ENCODE measurements at regions of chr20 and their contacts with region 1.

Region 1: GRCh38 chr20:58650776-58651558 is at the start of gene STX16:
- DNase-seq: peak; percentile 37 to 93
- H3K4me3 ChIP-seq: peak within 1 kb of the TSS; percentile 85 to 98
- H3K27ac ChIP-seq: peak within 1 kb of the TSS; percentile 85 to 93
- H3K4me1 ChIP-seq: peaks cover 3 to 41% of the 10 kb centered on the region in 2 donors
- H3K27me3 ChIP-seq: no peaks in the 10 kb centered on the region
- CTCF ChIP-seq: peak; percentile 46 to 63 (median 59)
- total RNA-seq, gene STX16: 24.7 TPM

Region 2: DNA sequence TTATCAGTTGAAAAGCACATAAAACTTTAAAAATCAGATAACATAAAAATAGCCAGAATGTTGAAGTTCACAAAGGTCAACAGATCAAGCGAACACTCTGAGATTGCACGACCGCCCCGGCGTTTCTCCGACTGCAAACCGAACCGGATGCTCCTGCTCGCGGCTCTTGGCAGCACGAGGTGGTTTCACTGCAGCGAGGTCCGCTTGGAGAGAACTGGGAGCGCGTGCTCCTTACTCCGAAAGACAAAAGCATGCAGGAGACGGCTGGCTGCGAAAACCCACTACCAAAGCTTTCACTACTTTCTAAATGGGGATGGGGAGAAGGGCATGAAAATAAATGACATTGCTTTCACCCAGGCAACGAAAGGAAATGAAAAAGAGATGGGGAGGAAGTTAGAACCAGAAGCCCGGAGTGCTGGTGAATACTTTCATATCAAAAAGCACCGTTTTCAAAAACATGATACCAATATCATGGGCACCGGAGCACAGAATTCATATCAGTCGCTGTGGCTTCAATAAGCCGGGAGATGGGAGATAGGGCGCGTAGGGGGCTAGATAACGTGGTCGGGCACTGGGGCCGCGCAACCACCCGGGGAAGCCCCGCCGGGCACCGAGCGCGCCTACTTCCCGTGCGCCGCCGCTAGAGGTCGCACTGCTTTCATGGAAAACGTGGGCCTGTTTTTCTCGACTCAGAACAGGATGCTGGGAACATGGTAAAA is 414.2 kb before region 1 on chr20:
- intact Hi-C with region 1: loop called (anchors 2 kb)
- DNase-seq: peak in 1 of 2 donors; percentile 85
- H3K4me3 ChIP-seq: peak overlapping the region; percentile 49 to 58
- H3K27ac ChIP-seq: peak overlapping the region; percentile 14 to 45
- H3K4me1 ChIP-seq: peaks cover 0 to 2% of the 10 kb centered on the region in 2 donors
- H3K27me3 ChIP-seq: no peaks in the 10 kb centered on the region
- CTCF ChIP-seq: peak; percentile 84 to 94 (median 94)

Region 3: DNA sequence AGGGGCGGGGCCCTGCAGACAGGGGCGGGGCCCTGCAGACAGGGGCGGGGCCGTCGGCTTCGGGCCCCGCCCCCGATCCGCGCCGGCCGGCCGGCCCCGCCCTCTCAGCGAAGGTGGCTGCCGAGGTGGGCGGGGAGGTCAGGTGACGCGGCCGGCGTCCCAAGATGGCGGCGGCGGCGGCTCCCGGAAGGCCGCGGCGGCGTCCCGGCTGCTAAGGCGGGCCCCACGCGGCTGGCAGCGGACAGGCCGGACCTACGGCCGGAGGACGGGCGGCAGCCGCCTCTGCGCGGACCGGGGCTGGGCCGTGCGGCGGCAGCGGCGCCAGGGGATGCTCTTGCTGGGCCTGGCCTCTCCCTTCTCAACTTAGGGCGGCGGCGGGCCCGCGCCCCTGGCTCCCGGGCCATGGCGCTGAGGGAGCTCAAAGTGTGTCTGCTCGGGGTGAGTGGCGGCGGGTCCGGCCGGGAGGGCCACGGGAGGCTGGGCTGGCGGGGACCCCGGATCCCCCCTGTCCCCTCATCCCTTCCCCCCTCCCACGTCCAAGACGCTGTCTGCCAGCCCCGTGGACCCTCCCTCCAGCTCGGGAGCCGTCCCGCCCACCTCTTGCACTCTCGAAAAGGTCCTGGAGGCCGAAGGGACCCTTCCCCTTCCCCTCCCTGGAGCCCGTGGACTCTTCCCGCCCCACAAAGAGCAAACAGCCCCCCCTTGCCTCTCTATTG is 341.2 kb before region 1 on chr20 and contains the start of gene RAB22A:
- intact Hi-C with region 1: loop called (anchors 2 kb)
- DNase-seq: peak in 1 of 2 donors; percentile 89
- H3K4me3 ChIP-seq: peak within 1 kb of the TSS; percentile 80 to 90
- H3K27ac ChIP-seq: peak within 1 kb of the TSS; percentile 78 to 82
- H3K4me1 ChIP-seq: peaks cover 0 to 6% of the 10 kb centered on the region in 2 donors
- H3K27me3 ChIP-seq: no peaks in the 10 kb centered on the region
- CTCF ChIP-seq: no peak
- total RNA-seq, gene RAB22A: 17.8 TPM

Region 4: DNA sequence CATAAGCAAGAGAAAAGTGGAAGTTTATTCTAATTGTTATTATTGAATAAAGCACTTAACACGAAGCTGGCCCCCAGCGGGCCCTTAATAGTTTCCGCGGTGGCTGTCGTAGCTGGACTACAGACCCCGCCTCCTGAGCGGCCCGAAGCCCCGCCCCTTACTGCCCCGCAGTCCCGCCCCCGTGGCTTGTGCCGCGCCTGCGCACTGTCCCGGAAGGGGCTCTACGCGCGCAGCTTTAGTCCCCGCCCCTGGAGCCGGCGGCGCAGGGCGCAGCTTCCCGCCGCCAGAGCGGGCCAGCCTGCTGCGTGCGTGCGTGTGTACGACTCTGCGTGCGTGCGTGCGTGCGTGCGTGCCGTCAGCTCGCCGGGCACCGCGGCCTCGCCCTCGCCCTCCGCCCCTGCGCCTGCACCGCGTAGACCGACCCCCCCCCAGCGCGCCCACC is 262.1 kb before region 1 on chr20 and contains the start of gene VAPB:
- intact Hi-C with region 1: loop called (anchors 2 kb)
- DNase-seq: peak; percentile 69 to 96
- H3K4me3 ChIP-seq: peak within 1 kb of the TSS; percentile 73 to 79
- H3K27ac ChIP-seq: peak within 1 kb of the TSS; percentile 81 to 91
- H3K4me1 ChIP-seq: peaks cover 3 to 15% of the 10 kb centered on the region in 2 donors
- H3K27me3 ChIP-seq: no peaks in the 10 kb centered on the region
- CTCF ChIP-seq: no peak
- total RNA-seq, gene VAPB: 11.1 TPM

Region 5: GRCh38 chr20:58515233-58516184 is 135.5 kb before region 1 on chr20 and contains the start of gene APCDD1L:
- intact Hi-C with region 1: loop called (anchors 2 kb)
- DNase-seq: peak in 1 of 2 donors; percentile 76
- H3K4me3 ChIP-seq: peak within 1 kb of the TSS; percentile 41 to 63
- H3K27ac ChIP-seq: peak within 1 kb of the TSS; percentile 2 to 48
- H3K4me1 ChIP-seq: peaks cover 7 to 15% of the 10 kb centered on the region in 2 donors
- H3K27me3 ChIP-seq: no peaks in the 10 kb centered on the region
- CTCF ChIP-seq: no peak
- total RNA-seq, gene APCDD1L: 2.1 TPM

Region 6: GRCh38 chr20:58584881-58585752 is 65.8 kb before region 1 on chr20:
- intact Hi-C with region 1: no loop called
- DNase-seq: peak in 1 of 2 donors; percentile 13
- H3K4me3 ChIP-seq: no peak overlapping the region
- H3K27ac ChIP-seq: no peak overlapping the region
- H3K4me1 ChIP-seq: no peaks in the 10 kb centered on the region
- H3K27me3 ChIP-seq: no peaks in the 10 kb centered on the region
- CTCF ChIP-seq: no peak

Region 7: GRCh38 chr20:58612121-58612691 is 38.8 kb before region 1 on chr20:
- intact Hi-C with region 1: loop called (anchors 2 kb)
- DNase-seq: no peak
- H3K4me3 ChIP-seq: peak overlapping the region in 1 of 2 donors; percentile 13
- H3K27ac ChIP-seq: peak overlapping the region; percentile 87 to 89
- H3K4me1 ChIP-seq: peaks cover 6 to 19% of the 10 kb centered on the region in 2 donors
- H3K27me3 ChIP-seq: no peaks in the 10 kb centered on the region
- CTCF ChIP-seq: no peak

Region 8: DNA sequence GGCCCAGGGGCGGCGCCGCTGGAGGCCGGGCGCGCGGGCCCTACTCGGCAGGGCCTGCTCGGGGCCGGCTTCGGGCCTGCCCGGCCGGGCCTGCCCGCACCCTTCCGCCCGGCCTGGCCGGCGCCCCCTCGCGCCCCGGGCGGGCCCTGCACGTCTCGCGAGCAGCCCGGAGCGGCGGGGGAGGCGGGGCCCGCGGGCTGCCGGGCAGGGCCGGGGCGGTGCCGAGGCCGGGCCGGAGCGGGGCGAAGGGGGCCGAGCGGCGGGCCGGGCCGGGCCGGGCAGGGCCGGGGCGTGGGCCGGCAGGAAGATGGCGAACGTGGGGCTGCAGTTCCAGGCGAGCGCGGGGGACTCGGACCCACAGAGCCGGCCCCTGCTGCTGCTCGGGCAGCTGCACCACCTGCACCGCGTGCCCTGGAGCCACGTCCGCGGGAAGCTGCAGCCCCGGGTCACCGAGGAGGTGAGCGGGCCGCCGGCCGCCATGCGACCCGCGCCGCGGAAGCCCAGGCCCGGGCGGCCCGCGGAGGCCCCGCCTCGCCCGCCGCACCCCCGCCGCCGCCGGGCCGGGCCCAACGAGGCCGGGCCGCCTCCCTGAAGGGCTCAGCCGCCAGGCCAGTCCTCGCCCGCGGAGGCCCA is 41.7 kb after region 1 on chr20 and contains the start of gene NPEPL1:
- intact Hi-C with region 1: loop called (anchors 1 kb)
- DNase-seq: peak in 1 of 2 donors; percentile 78
- H3K4me3 ChIP-seq: peak within 1 kb of the TSS; percentile 52 to 81
- H3K27ac ChIP-seq: peak within 1 kb of the TSS; percentile 90 to 96
- H3K4me1 ChIP-seq: peaks cover 12 to 22% of the 10 kb centered on the region in 2 donors
- H3K27me3 ChIP-seq: no peaks in the 10 kb centered on the region
- CTCF ChIP-seq: peak in 1 of 3 experiments; percentile 54
- total RNA-seq, gene NPEPL1: 68.3 TPM

Measured in ascending aorta (tissue), 2 donors.